ENCODE measurements at regions of chr20 and their contacts with region 1.

Region 1: GRCh38 chr20:20824924-20825584 is 112.6 kb upstream of the RALGAPA2 start:
- DNase-seq: peak; percentile 49 to 53
- ATAC-seq: peak; percentile 35 to 80; a peak in 3 of 6 replicates
- H3K4me3 ChIP-seq: no peak overlapping the region
- H3K27ac ChIP-seq: no peak overlapping the region
- H3K4me1 ChIP-seq: no peaks in the 10 kb centered on the region
- CTCF ChIP-seq: peak; percentile 76
- EP300 ChIP-seq: no peak
- POLR2A ChIP-seq: no peak
- RAD21 ChIP-seq: peak; percentile 67

Region 2: GRCh38 chr20:20593447-20594170 is 231.4 kb before region 1 on chr20:
- CTCF ChIA-PET with region 1: interaction called, 20 read pairs
- POLR2A ChIA-PET with region 1: no interaction called
- DNase-seq: peak; percentile 51 to 61
- ATAC-seq: peak; percentile 93 to 94
- H3K4me3 ChIP-seq: no peak overlapping the region
- H3K27ac ChIP-seq: no peak overlapping the region
- H3K4me1 ChIP-seq: no peaks in the 10 kb centered on the region
- CTCF ChIP-seq: peak; percentile 71
- EP300 ChIP-seq: no peak
- POLR2A ChIP-seq: no peak
- RAD21 ChIP-seq: peak; percentile 32 to 39; a peak in 4 of 5 replicates

Region 3: GRCh38 chr20:20664795-20665589 is 160.1 kb before region 1 on chr20:
- CTCF ChIA-PET with region 1: interaction called, 42 read pairs
- POLR2A ChIA-PET with region 1: no interaction called
- DNase-seq: peak; percentile 8 to 66
- ATAC-seq: peak; percentile 94 to 97
- H3K4me3 ChIP-seq: no peak overlapping the region
- H3K27ac ChIP-seq: no peak overlapping the region
- H3K4me1 ChIP-seq: no peaks in the 10 kb centered on the region
- CTCF ChIP-seq: peak; percentile 75
- EP300 ChIP-seq: no peak
- POLR2A ChIP-seq: no peak
- RAD21 ChIP-seq: peak; percentile 78

Region 4: DNA sequence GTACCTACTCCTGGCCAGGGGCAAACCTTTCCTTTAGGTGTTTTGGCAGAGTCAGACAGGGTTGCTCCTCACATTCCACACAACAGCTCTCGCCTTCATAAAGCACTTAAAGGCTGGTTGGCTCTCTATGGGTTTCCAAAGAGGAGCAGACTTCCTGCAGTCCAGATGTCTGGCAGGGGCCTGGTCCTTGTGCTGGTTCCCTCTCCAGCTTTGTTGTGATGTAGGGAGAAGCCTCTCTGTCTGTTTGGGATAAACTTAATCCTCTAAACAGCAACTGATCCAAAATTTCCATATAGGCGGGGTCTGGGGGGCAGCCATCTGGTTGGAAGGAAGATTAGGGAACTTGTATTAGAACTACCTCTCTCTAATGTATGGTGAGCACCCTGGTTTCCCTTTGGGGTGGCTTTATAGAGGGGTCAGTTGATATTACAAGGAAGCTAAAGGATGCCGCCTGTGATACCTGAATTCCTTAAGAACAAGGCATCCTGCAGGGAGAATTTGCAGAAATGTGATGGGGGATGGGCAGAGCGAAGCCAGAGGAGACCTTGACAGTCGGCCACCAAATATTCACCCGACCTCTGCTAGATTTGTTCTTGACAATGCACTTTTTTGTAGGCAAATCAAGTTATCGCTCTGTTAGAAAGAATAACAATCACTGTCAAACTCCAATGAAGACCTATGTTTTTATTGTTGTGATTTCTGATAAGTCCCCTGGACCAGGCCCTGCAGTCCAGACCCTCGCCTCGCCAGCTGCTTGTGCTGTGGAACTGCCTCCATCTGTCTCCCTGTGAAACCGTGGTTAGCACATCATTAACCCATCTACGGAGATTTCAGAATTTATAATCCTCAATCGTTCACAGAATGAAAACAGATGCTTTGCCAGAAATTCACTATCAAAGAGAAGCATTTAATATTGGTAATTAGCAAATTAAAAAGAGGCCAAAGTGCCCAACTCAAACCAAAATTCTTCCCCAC is 18.6 kb before region 1 on chr20:
- CTCF ChIA-PET with region 1: interaction called, 16 read pairs
- POLR2A ChIA-PET with region 1: no interaction called
- DNase-seq: no peak
- ATAC-seq: no peak
- H3K4me3 ChIP-seq: no peak overlapping the region
- H3K27ac ChIP-seq: no peak overlapping the region
- H3K4me1 ChIP-seq: no peaks in the 10 kb centered on the region
- CTCF ChIP-seq: no peak
- EP300 ChIP-seq: no peak
- POLR2A ChIP-seq: no peak
- RAD21 ChIP-seq: no peak

Region 5: DNA sequence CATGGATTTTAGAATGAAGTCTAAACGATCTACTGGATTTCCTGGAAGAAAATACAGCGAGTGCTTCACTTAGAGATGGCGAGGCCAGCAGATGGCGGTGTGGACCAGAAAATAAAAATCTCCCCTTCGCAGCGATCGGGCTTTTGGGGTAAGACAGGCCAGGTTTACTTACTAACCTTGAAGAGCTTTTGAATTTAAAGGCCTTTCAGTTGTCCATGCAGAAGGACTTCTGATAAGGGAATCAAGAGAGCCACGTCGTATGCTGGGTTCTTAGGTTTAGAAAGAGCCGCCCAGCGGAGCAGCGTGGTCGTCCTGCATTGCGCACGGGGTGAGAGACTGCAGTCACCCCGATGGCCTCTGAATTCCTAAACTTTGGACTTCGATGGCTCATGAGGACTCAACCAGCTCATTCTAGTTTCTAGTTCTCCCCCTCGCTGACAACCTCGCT is 12.5 kb after region 1 on chr20:
- CTCF ChIA-PET with region 1: interaction called, 105 read pairs
- POLR2A ChIA-PET with region 1: no interaction called
- DNase-seq: peak; percentile 59 to 65
- ATAC-seq: peak; percentile 80 to 89; a peak in 5 of 6 replicates
- H3K4me3 ChIP-seq: no peak overlapping the region
- H3K27ac ChIP-seq: no peak overlapping the region
- H3K4me1 ChIP-seq: no peaks in the 10 kb centered on the region
- CTCF ChIP-seq: peak; percentile 85
- EP300 ChIP-seq: no peak
- POLR2A ChIP-seq: no peak
- RAD21 ChIP-seq: peak; percentile 85 to 89

Region 6: GRCh38 chr20:20860078-20860806 is 35.2 kb after region 1 on chr20:
- CTCF ChIA-PET with region 1: interaction called, 11 read pairs
- POLR2A ChIA-PET with region 1: no interaction called
- DNase-seq: peak; percentile 87 to 92
- ATAC-seq: peak; percentile 93 to 97
- H3K4me3 ChIP-seq: no peak overlapping the region
- H3K27ac ChIP-seq: no peak overlapping the region
- H3K4me1 ChIP-seq: no peaks in the 10 kb centered on the region
- CTCF ChIP-seq: peak; percentile 95
- EP300 ChIP-seq: no peak
- POLR2A ChIP-seq: no peak
- RAD21 ChIP-seq: peak; percentile 81 to 88

Measured in A549 (cell line).